ENCODE measurements at regions of chr6 and their contacts with region 1.

Region 1: DNA sequence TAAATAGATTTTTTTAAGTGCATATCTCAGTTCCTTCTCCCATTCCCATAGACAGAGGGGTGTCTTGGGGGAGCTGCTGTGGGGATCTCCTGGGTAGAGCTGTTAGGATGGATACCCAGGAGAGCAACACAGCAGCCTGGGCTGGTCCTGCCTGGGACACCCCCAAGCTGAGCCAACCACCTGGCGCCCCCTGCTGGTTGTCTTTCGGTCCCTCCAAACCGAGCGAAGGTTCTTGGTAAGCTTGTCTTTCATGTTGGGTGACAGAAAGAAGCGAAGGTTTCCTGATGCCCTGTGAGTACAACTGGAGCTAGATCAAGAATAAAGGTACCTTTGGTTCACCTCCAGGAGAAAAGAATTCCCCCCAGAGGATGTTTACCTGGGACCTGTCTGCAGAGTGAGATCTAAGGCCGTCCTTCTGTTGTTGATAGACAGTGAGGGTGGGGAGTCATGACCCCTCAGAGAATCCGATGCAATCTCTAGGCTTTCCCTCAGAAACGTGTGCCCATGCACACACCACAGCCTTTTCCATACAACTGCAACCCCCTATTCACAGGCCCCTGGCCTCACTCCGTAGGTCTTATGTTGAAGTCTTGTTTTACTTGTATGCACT is 50.8 kb downstream of the SNX9 start:
- DNase-seq: peak; percentile 64
- ATAC-seq: peak; percentile 97
- H3K4me3 ChIP-seq: no peak overlapping the region
- H3K27ac ChIP-seq: no peak overlapping the region
- H3K4me1 ChIP-seq: no peaks in the 10 kb centered on the region
- H3K27me3 ChIP-seq: no peaks in the 10 kb centered on the region
- CTCF ChIP-seq: peak; percentile 91
- EP300 ChIP-seq: no peak
- POLR2A ChIP-seq: no peak
- RAD21 ChIP-seq: peak; percentile 92

Region 2: GRCh38 chr6:157269261-157269794 is 604.5 kb before region 1 on chr6:
- CTCF ChIA-PET with region 1: no interaction called
- POLR2A ChIA-PET with region 1: no interaction called
- in situ Hi-C with region 1: no loop called
- intact Hi-C with region 1: no loop called
- DNase-seq: no peak
- ATAC-seq: peak; percentile 17; the same call in 2 of the 3 replicates
- H3K4me3 ChIP-seq: peak overlapping the region in 1 of 3 experiments; percentile 40; a peak in 3 of 6 replicates
- H3K27ac ChIP-seq: no peak overlapping the region
- H3K4me1 ChIP-seq: peaks cover 27% of the 10 kb centered on the region
- H3K27me3 ChIP-seq: peaks cover 6 to 52% of the 10 kb centered on the region in 2 experiments; a peak in 4 of 5 replicates
- CTCF ChIP-seq: no peak
- EP300 ChIP-seq: no peak
- POLR2A ChIP-seq: no peak
- RAD21 ChIP-seq: no peak

Region 3: DNA sequence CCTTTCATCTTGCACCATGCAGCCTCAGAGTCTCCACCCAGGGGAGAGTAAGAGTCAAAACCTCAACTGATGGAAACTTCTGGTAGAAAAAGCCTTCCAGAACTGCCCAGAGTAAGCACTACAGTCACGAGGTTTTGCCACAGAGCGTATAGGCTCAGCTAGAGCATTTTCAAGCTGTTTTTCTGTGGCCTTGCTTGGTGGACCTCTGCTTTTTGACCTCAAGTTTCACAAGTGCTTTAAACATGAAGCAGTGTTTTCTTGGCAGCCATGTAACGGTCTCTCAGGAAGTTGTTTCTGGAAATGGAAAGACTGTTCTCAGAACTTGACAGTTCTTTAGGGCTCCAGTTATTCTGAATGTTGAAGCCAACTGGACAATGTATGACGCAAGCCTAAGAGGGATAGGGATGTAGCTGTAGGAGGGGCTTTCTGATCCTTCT is 346.4 kb before region 1 on chr6:
- CTCF ChIA-PET with region 1: no interaction called
- POLR2A ChIA-PET with region 1: no interaction called
- in situ Hi-C with region 1: no loop called
- intact Hi-C with region 1: no loop called
- DNase-seq: no peak
- ATAC-seq: no peak
- H3K4me3 ChIP-seq: no peak overlapping the region
- H3K27ac ChIP-seq: peak overlapping the region; percentile 27
- H3K4me1 ChIP-seq: peaks cover 78% of the 10 kb centered on the region
- H3K27me3 ChIP-seq: no peaks in the 10 kb centered on the region
- CTCF ChIP-seq: no peak
- EP300 ChIP-seq: no peak
- POLR2A ChIP-seq: no peak
- RAD21 ChIP-seq: 0 out of 2 replicates have a peak, but pooled peaks have one; percentile 12

Region 4: GRCh38 chr6:157823001-157823527 is 50.8 kb before region 1 on chr6 and contains the start of gene SNX9:
- CTCF ChIA-PET with region 1: interaction called, 3 read pairs
- POLR2A ChIA-PET with region 1: no interaction called
- in situ Hi-C with region 1: no loop called
- intact Hi-C with region 1: loop called (anchors 5 kb)
- DNase-seq: peak; percentile 54
- ATAC-seq: peak; percentile 86
- H3K4me3 ChIP-seq: peak within 1 kb of the TSS; percentile 95 to 99 (median 98)
- H3K27ac ChIP-seq: peak within 1 kb of the TSS; percentile 79
- H3K4me1 ChIP-seq: peaks cover 39% of the 10 kb centered on the region
- H3K27me3 ChIP-seq: peaks cover 4 to 20% of the 10 kb centered on the region in 2 experiments; a peak in 4 of 5 replicates
- CTCF ChIP-seq: no peak
- EP300 ChIP-seq: no peak
- POLR2A ChIP-seq: peak; percentile 46 to 70; a peak in 3 of 4 replicates
- RAD21 ChIP-seq: peak; percentile 49
- total RNA-seq, gene SNX9: 21.9 and 27.7 TPM in 2 replicates